ENCODE measurements at regions of chr19 and their contacts with region 1.

Region 1: DNA sequence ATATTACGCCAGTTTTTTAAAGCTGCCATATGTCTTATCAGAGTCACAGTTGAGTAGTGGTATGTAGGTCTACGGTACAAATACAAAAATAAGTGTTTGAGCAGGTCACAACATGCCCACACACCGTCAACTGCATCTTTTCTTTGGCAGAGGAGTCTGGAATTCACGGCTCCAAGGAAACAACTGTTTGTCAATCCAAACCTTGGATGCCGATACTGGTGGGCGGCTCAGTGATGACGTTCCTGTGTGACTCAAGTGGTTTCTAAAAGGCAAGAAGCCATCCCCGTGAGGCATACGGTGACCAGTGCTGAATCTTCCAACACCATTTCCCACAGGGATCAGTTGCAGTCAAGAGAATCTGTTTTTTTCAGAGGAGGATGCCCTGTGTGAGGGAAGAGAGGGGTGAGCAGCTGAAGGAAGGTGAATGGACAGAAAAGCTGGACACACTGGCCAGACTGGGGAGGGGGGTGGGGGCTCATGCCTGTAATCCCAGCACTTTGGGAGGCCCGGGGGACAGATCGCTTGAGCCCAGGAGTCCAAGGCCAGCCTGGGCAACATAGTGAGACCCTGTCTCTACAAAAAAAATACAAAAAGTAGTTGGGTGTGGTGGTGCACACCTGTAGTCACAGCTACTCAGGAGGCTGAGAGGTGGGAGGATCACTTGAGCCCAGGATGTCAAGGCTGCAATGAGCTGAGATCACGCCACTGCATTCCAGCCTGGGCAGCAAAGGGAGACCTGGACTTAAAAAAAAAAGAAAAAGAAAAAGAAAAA is 22.8 kb upstream of the CEBPG start:
- DNase-seq: no peak
- ATAC-seq: no peak
- H3K4me3 ChIP-seq: no peak overlapping the region
- H3K27ac ChIP-seq: no peak overlapping the region
- H3K4me1 ChIP-seq: peaks cover 40% of the 10 kb centered on the region
- H3K27me3 ChIP-seq: no peaks in the 10 kb centered on the region
- CTCF ChIP-seq: no peak
- EP300 ChIP-seq: no peak
- POLR2A ChIP-seq: no peak
- RAD21 ChIP-seq: no peak

Region 2: GRCh38 chr19:33317531-33317930 is 33.2 kb before region 1 on chr19:
- CTCF ChIA-PET with region 1: no interaction called
- POLR2A ChIA-PET with region 1: no interaction called
- in situ Hi-C with region 1: no loop called
- intact Hi-C with region 1: no loop called
- DNase-seq: no peak
- ATAC-seq: no peak
- H3K4me3 ChIP-seq: no peak overlapping the region
- H3K27ac ChIP-seq: no peak overlapping the region
- H3K4me1 ChIP-seq: peaks cover 18% of the 10 kb centered on the region
- H3K27me3 ChIP-seq: no peaks in the 10 kb centered on the region
- CTCF ChIP-seq: no peak
- EP300 ChIP-seq: no peak
- POLR2A ChIP-seq: no peak
- RAD21 ChIP-seq: no peak

Region 3: GRCh38 chr19:33332248-33332647 is 18.5 kb before region 1 on chr19:
- CTCF ChIA-PET with region 1: no interaction called
- POLR2A ChIA-PET with region 1: interaction called, 13 read pairs
- in situ Hi-C with region 1: no loop called
- intact Hi-C with region 1: no loop called
- DNase-seq: no peak
- ATAC-seq: no peak
- H3K4me3 ChIP-seq: no peak overlapping the region
- H3K27ac ChIP-seq: no peak overlapping the region
- H3K4me1 ChIP-seq: peaks cover 36% of the 10 kb centered on the region
- H3K27me3 ChIP-seq: peaks cover 0 to 6% of the 10 kb centered on the region in 2 experiments; a peak in 1 of 5 replicates
- CTCF ChIP-seq: no peak
- EP300 ChIP-seq: no peak
- POLR2A ChIP-seq: no peak
- RAD21 ChIP-seq: no peak

Region 4: DNA sequence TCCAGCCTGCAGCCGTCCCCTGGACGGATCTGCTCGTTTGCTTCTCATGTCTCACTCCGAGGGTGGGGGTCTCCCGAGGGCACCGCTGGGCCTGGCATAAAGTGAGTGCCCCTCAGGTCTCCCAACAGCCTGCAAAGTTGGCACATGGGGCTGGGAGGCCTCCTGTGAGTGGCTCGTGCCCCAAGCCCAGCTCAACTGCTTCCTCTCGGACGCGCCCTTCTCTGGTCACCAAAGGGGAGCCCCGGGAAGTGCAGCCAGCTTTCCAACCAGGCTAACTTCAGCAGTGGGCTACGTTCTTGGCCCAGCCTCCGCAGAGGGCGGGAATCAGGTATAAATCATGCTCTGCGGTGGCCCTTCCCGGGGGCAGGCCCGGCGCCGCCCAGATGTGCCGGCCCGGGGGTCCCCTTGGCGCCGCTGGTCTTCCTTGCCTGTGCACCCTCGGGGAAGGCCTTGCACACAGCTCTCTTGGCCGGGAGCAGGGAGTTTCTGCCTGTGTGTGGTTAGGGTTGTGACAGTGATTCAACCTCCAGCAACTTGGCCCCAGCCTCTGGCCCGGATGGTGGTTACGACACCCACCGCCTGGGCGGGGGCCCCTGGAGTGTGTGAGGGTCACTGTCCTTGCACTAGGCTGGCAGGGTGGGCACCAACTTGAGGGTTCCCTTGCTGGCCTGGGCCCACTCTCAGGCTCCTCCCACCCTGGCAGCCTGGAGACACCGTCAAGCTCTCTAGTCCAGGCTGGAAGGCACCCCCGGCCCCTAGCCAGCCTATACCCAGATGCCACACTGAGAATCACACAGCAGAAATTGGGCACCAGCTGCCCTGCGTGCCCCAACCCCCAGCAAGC is 43.5 kb after region 1 on chr19:
- CTCF ChIA-PET with region 1: no interaction called
- POLR2A ChIA-PET with region 1: interaction called, 14 read pairs
- in situ Hi-C with region 1: no loop called
- intact Hi-C with region 1: no loop called
- DNase-seq: peak; percentile 55
- ATAC-seq: peak; percentile 5
- H3K4me3 ChIP-seq: peak overlapping the region; percentile 15 to 64 (median 33); a peak in 4 of 6 replicates
- H3K27ac ChIP-seq: peak overlapping the region; percentile 94
- H3K4me1 ChIP-seq: peaks cover 95% of the 10 kb centered on the region
- H3K27me3 ChIP-seq: no peaks in the 10 kb centered on the region
- CTCF ChIP-seq: no peak
- EP300 ChIP-seq: no peak; a peak in 1 of 4 replicates
- POLR2A ChIP-seq: peak; percentile 36 to 44; a peak in 1 of 4 replicates
- RAD21 ChIP-seq: peak; percentile 45; the same call in 1 of the 2 replicates

Measured in HepG2 (cell line).